Activated CD4-positive, alpha-beta T cell treated with anti-CD3 and anti-CD28 coated beads for 36 hours (primary cell): ENCODE measurements at regions of chr3 and their contacts with region 1.

Region 1: GRCh38 chr3:122484985-122485384 is 29.8 kb downstream of the KPNA1 start:
- DNase-seq: no peak
- ATAC-seq: no peak
- H3K4me3 Mint-ChIP-seq: no peak overlapping the region
- H3K27ac Mint-ChIP-seq: no peak overlapping the region
- H3K4me1 Mint-ChIP-seq: peaks cover 69% of the 10 kb centered on the region
- H3K27me3 Mint-ChIP-seq: no peaks in the 10 kb centered on the region

Region 2: GRCh38 chr3:121817753-121818152 is 667.2 kb before region 1 on chr3:
- CTCF ChIA-PET with region 1: no interaction called
- POLR2A ChIA-PET with region 1: no interaction called
- intact Hi-C with region 1: no loop called
- DNase-seq: no peak
- ATAC-seq: no peak
- H3K4me3 Mint-ChIP-seq: no peak overlapping the region
- H3K27ac Mint-ChIP-seq: no peak overlapping the region
- H3K4me1 Mint-ChIP-seq: peaks cover 32% of the 10 kb centered on the region
- H3K27me3 Mint-ChIP-seq: no peaks in the 10 kb centered on the region

Region 3: GRCh38 chr3:122374034-122374433 is 111.0 kb before region 1 on chr3:
- CTCF ChIA-PET with region 1: no interaction called
- POLR2A ChIA-PET with region 1: no interaction called
- intact Hi-C with region 1: no loop called
- DNase-seq: no peak
- ATAC-seq: no peak
- H3K4me3 Mint-ChIP-seq: no peak overlapping the region
- H3K27ac Mint-ChIP-seq: no peak overlapping the region
- H3K4me1 Mint-ChIP-seq: peaks cover 20% of the 10 kb centered on the region
- H3K27me3 Mint-ChIP-seq: no peaks in the 10 kb centered on the region

Region 4: GRCh38 chr3:122427857-122428471 is 57.0 kb before region 1 on chr3:
- CTCF ChIA-PET with region 1: no interaction called
- POLR2A ChIA-PET with region 1: no interaction called
- intact Hi-C with region 1: loop called in 1 of 2 experiments (anchors 1 kb)
- DNase-seq: no peak
- ATAC-seq: peak; percentile 93
- H3K4me3 Mint-ChIP-seq: no peak overlapping the region
- H3K27ac Mint-ChIP-seq: peak overlapping the region; percentile 70
- H3K4me1 Mint-ChIP-seq: peaks cover 18% of the 10 kb centered on the region
- H3K27me3 Mint-ChIP-seq: no peaks in the 10 kb centered on the region

Region 5: DNA sequence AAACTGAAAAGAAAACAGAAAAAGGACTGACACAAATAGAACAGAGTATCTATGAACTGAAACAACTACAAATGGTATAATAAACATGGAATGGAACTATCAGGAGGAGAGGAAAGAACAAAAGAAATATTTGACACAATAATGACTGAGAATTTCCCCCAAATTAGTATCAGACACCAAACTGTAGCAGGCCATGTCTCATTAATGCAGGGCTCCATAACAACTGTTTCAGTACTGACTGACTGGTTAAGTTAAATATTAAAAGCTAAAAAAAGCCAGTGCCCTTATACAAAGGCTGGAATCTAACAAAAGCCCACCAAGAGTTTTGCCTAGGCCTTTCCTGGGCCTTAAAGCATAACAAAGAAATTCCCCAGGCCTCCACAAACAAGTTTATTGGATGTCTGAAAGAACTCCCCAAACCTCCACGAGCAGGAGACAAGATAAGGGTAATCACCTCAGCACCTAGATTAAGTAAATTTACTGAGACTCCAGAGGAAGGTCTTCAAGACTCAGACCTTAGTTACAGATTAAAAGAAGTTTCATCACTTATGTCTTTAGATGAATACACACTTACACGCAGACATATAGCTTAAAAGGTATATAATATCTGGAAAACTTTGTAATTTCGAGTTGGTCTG is 16.0 kb before region 1 on chr3:
- CTCF ChIA-PET with region 1: no interaction called
- POLR2A ChIA-PET with region 1: no interaction called
- intact Hi-C with region 1: loop called (anchors 2 kb)
- DNase-seq: no peak
- ATAC-seq: no peak
- H3K4me3 Mint-ChIP-seq: no peak overlapping the region
- H3K27ac Mint-ChIP-seq: no peak overlapping the region
- H3K4me1 Mint-ChIP-seq: peaks cover 57% of the 10 kb centered on the region
- H3K27me3 Mint-ChIP-seq: no peaks in the 10 kb centered on the region

Region 6: GRCh38 chr3:122497425-122497824 is 12.4 kb after region 1 on chr3:
- CTCF ChIA-PET with region 1: interaction called, 6 read pairs
- POLR2A ChIA-PET with region 1: no interaction called
- intact Hi-C with region 1: loop called (anchors 1 kb)
- DNase-seq: peak; percentile 58
- ATAC-seq: peak; percentile 98
- H3K4me3 Mint-ChIP-seq: no peak overlapping the region
- H3K27ac Mint-ChIP-seq: no peak overlapping the region
- H3K4me1 Mint-ChIP-seq: peaks cover 50% of the 10 kb centered on the region
- H3K27me3 Mint-ChIP-seq: peaks cover 2% of the 10 kb centered on the region

Region 7: GRCh38 chr3:122576174-122576940 is 91.4 kb after region 1 on chr3:
- CTCF ChIA-PET with region 1: no interaction called
- POLR2A ChIA-PET with region 1: no interaction called
- intact Hi-C with region 1: loop called in 1 of 2 experiments (anchors 1 kb)
- DNase-seq: peak; percentile 78
- ATAC-seq: peak; percentile 90
- H3K4me3 Mint-ChIP-seq: peak overlapping the region; percentile 24
- H3K27ac Mint-ChIP-seq: peak overlapping the region; percentile 87
- H3K4me1 Mint-ChIP-seq: peaks cover 58% of the 10 kb centered on the region
- H3K27me3 Mint-ChIP-seq: no peaks in the 10 kb centered on the region